ENCODE measurements at regions of chr2 and their contacts with region 1.

Region 1: GRCh38 chr2:10122386-10123280 is at the start of gene RRM2:
- DNase-seq: peak; percentile 87 to 96 (median 91)
- ATAC-seq: peak; percentile 75 to 86 (median 82)
- H3K4me3 ChIP-seq: peak within 1 kb of the TSS; percentile 29 to 69 (median 39)
- H3K27ac ChIP-seq: no peak within 1 kb of the TSS
- H3K4me1 ChIP-seq: peaks cover 12 to 26% (median 14%) of the 10 kb centered on the region in 3 donors
- H3K27me3 ChIP-seq: no peaks in the 10 kb centered on the region
- CTCF ChIP-seq: no peak
- total RNA-seq, gene RRM2: 0.24 to 3.0 (median 2.1) TPM

Region 2: DNA sequence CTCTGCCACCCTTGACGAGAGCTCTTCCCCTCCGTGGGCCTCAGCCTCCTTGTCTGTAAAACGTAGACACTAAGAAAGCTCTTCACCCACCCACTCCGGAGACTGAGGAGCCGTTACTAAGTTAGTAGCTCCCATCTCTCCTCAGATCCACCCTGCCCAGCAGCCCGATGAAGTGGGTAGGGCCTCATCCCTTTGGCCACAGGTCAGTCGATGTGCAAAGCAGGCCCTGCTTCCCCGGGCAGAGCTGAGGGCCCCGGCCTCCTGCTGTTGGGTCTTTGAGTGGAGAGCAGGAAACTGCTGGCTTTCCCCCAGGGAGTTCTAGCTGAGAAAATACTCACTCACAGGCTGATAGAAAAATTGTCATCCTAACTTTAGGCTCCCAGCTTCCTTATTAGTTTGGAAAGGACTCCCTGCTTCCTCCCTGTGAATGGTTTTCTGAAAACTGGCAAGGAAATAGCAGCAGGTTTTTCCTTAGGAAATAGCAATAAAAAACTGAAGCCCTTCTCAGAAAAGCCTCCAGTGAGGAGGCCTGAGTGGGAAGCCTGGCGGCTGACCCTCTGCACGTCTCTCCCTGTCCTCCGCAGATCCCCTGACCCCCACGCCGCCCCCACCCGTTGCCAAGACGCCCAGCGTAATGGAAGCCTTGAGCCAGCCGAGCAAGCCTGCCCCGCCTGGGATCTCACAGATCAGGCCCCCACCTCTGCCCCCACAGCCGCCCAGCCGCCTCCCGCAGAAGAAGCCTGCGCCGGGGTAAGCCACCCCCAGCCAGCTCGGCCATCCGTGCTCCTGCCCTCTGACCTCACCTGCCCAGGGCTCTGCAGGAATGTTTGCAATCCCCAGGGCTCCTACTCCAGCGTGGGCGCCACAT is 729.5 kb before region 1 on chr2:
- intact Hi-C with region 1: no loop called
- DNase-seq: peak in 1 of 6 donors; percentile 46
- ATAC-seq: no peak
- H3K4me3 ChIP-seq: no peak overlapping the region
- H3K27ac ChIP-seq: no peak overlapping the region
- H3K4me1 ChIP-seq: no peaks in the 10 kb centered on the region
- H3K27me3 ChIP-seq: no peaks in the 10 kb centered on the region
- CTCF ChIP-seq: no peak

Region 3: GRCh38 chr2:10678222-10678621 is 555.6 kb after region 1 on chr2:
- intact Hi-C with region 1: loop called in 1 of 3 experiments (anchors 10 kb)
- DNase-seq: no peak
- ATAC-seq: no peak
- H3K4me3 ChIP-seq: no peak overlapping the region
- H3K27ac ChIP-seq: no peak overlapping the region
- H3K4me1 ChIP-seq: no peaks in the 10 kb centered on the region
- H3K27me3 ChIP-seq: no peaks in the 10 kb centered on the region
- CTCF ChIP-seq: peak in 2 of 4 donors; percentile 14 to 19